GM12878 (cell line): ENCODE measurements at regions of chr15 and their contacts with region 1.

Region 1: GRCh38 chr15:60585743-60586708 is 107.1 kb upstream of the ICE2 start:
- DNase-seq: no peak
- ATAC-seq: peak; percentile 34
- H3K4me3 ChIP-seq: peak overlapping the region; percentile 11
- H3K27ac ChIP-seq: peak overlapping the region; percentile 94
- H3K4me1 ChIP-seq: peaks cover 45% of the 10 kb centered on the region
- H3K27me3 ChIP-seq: no peaks in the 10 kb centered on the region
- CTCF ChIP-seq: peak; percentile 74 to 90 (median 90)
- EP300 ChIP-seq: no peak
- POLR2A ChIP-seq: no peak
- RAD21 ChIP-seq: peak; percentile 95

Region 2: DNA sequence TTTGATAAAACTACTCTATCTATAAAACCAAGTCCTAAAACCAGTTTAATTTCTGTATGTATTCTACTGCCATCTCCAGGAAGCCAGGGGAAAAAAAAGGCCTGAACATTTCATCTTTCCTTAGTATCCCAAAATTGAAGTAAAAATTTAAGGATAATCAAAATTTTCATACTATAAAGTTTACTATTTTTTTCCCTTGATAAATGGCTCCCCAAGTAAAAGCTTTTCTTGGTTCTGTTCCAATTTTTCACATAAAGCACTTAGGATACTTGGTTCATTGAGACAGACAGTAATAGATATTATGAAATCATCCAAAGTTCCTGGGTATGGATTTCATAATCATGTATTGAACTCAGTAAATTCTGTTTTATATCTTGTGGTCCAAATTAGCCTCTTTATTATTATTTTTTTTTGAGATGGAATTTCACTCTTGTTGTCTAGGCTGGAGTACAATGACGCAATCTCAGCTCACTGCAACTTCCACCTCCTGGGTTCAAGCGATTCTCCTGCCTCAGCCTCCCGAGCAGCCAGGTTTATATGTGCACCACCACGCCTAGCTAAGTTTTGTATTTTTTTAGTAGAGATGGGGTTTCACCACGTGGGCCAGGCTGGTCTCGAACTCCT is 141.6 kb before region 1 on chr15:
- CTCF ChIA-PET with region 1: no interaction called
- POLR2A ChIA-PET with region 1: no interaction called
- RAD21 ChIA-PET with region 1: no interaction called
- SMC1A ChIA-PET with region 1: no interaction called
- in situ Hi-C with region 1: no loop called
- intact Hi-C with region 1: no loop called
- DNase-seq: no peak
- ATAC-seq: no peak
- H3K4me3 ChIP-seq: no peak overlapping the region
- H3K27ac ChIP-seq: no peak overlapping the region
- H3K4me1 ChIP-seq: no peaks in the 10 kb centered on the region
- H3K27me3 ChIP-seq: no peaks in the 10 kb centered on the region
- CTCF ChIP-seq: no peak; a peak in 1 of 6 replicates
- EP300 ChIP-seq: no peak
- POLR2A ChIP-seq: no peak
- RAD21 ChIP-seq: no peak

Region 3: GRCh38 chr15:60507596-60508424 is 78.2 kb before region 1 on chr15:
- CTCF ChIA-PET with region 1: interaction called, 56 read pairs
- POLR2A ChIA-PET with region 1: no interaction called
- RAD21 ChIA-PET with region 1: interaction called, 35 read pairs
- SMC1A ChIA-PET with region 1: interaction called, 25 read pairs
- in situ Hi-C with region 1: no loop called
- intact Hi-C with region 1: loop called (anchors 2 kb)
- DNase-seq: peak; percentile 83
- ATAC-seq: peak; percentile 92
- H3K4me3 ChIP-seq: no peak overlapping the region
- H3K27ac ChIP-seq: peak overlapping the region; percentile 46; the same call in 1 of the 2 replicates
- H3K4me1 ChIP-seq: peaks cover 18% of the 10 kb centered on the region
- H3K27me3 ChIP-seq: no peaks in the 10 kb centered on the region
- CTCF ChIP-seq: peak; percentile 88 to 97 (median 95)
- EP300 ChIP-seq: no peak
- POLR2A ChIP-seq: no peak
- RAD21 ChIP-seq: peak; percentile 92

Region 4: DNA sequence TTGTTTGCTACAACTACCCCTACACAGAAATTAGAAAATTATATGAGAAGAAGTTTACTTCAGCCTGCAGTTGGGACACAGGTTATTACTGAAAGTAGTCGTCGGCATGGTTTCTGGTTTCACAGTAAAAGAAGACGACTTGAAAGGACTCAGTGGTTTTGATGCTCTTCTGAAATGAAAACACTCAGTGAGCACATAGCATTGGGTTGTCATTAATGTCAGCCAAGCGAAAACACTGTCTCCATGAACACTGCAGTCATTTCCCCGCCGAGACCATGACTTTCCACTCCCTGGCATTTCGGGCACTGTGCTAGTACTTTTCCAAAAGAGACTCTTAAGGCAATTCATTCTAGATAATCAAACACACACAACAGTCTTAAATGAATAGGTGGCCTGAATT is 37.9 kb before region 1 on chr15:
- CTCF ChIA-PET with region 1: interaction called, 44 read pairs
- POLR2A ChIA-PET with region 1: interaction called, 4 read pairs
- RAD21 ChIA-PET with region 1: interaction called, 39 read pairs
- SMC1A ChIA-PET with region 1: interaction called, 113 read pairs
- in situ Hi-C with region 1: no loop called
- intact Hi-C with region 1: loop called (anchors 2 kb)
- DNase-seq: peak; percentile 85
- ATAC-seq: peak; percentile 86
- H3K4me3 ChIP-seq: peak overlapping the region; percentile 11; the same call in 1 of the 2 replicates
- H3K27ac ChIP-seq: peak overlapping the region; percentile 66
- H3K4me1 ChIP-seq: peaks cover 49% of the 10 kb centered on the region
- H3K27me3 ChIP-seq: no peaks in the 10 kb centered on the region
- CTCF ChIP-seq: no peak
- EP300 ChIP-seq: peak; percentile 66 to 76
- POLR2A ChIP-seq: no peak
- RAD21 ChIP-seq: peak; percentile 10; the same call in 1 of the 2 replicates

Region 5: DNA sequence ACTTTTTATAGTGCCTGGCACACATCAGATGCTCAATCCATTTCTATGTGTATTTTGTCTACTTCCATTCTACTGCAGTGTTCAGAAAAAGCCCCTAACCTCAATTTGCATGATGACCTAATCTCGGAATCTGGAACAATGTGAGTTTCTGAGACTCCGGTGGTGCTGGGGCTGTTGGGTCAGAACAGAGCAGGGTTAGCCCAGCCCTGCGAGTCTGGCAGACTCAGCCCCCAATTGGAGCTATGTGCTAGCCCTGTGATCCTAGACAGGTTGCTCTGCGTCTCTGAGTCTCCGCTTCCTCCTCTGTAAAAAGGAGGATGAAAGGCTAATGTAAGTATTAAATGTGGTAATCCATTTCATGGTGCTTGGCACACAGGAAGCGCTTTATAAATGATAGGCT is 12.1 kb before region 1 on chr15:
- CTCF ChIA-PET with region 1: interaction called, 143 read pairs
- POLR2A ChIA-PET with region 1: interaction called, 15 read pairs
- RAD21 ChIA-PET with region 1: interaction called, 309 read pairs
- SMC1A ChIA-PET with region 1: interaction called, 480 read pairs
- in situ Hi-C with region 1: no loop called
- intact Hi-C with region 1: loop called (anchors 2 kb)
- DNase-seq: no peak
- ATAC-seq: peak; percentile 82
- H3K4me3 ChIP-seq: peak overlapping the region; percentile 56; the same call in 1 of the 2 replicates
- H3K27ac ChIP-seq: peak overlapping the region; percentile 84
- H3K4me1 ChIP-seq: peaks cover 71% of the 10 kb centered on the region
- H3K27me3 ChIP-seq: no peaks in the 10 kb centered on the region
- CTCF ChIP-seq: no peak
- EP300 ChIP-seq: peak in 1 of 2 experiments; percentile 57; a peak in 1 of 4 replicates
- POLR2A ChIP-seq: peak; percentile 50; the same call in 1 of the 2 replicates
- RAD21 ChIP-seq: no peak

Region 6: GRCh38 chr15:60798821-60799220 is 212.8 kb after region 1 on chr15:
- CTCF ChIA-PET with region 1: interaction called, 7 read pairs
- POLR2A ChIA-PET with region 1: no interaction called
- RAD21 ChIA-PET with region 1: no interaction called
- SMC1A ChIA-PET with region 1: no interaction called
- in situ Hi-C with region 1: no loop called
- intact Hi-C with region 1: loop called (anchors 5 kb)
- DNase-seq: peak; percentile 19
- ATAC-seq: peak; percentile 76
- H3K4me3 ChIP-seq: no peak overlapping the region
- H3K27ac ChIP-seq: no peak overlapping the region
- H3K4me1 ChIP-seq: peaks cover 19% of the 10 kb centered on the region
- H3K27me3 ChIP-seq: no peaks in the 10 kb centered on the region
- CTCF ChIP-seq: no peak
- EP300 ChIP-seq: no peak
- POLR2A ChIP-seq: no peak
- RAD21 ChIP-seq: 0 out of 2 replicates have a peak, but pooled peaks have one; percentile 20

Region 7: DNA sequence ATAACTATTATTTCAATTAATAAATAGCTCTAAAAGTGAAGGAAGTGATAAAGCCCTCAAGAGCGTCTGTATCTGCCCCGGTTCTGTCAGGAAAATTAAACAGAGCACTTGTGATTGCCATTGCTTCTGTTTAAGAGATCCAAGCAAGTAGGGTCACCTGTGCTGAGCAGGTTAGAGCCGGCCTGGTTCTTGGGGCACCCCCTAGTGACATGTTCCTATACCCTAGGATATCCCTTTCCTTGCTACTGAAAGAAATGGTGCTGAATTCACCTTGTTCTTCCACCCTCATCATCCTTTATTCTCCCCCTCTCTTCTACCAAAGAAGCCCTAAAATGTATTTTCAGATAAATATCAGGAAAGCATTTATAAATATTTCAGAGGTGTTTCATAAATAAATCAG is 319.6 kb after region 1 on chr15:
- CTCF ChIA-PET with region 1: interaction called, 82 read pairs
- POLR2A ChIA-PET with region 1: interaction called, 5 read pairs
- RAD21 ChIA-PET with region 1: interaction called, 16 read pairs
- SMC1A ChIA-PET with region 1: interaction called, 22 read pairs
- in situ Hi-C with region 1: loop called (anchors 5 kb)
- intact Hi-C with region 1: loop called (anchors 5 kb)
- DNase-seq: no peak
- ATAC-seq: peak; percentile 32
- H3K4me3 ChIP-seq: no peak overlapping the region
- H3K27ac ChIP-seq: no peak overlapping the region
- H3K4me1 ChIP-seq: peaks cover 26% of the 10 kb centered on the region
- H3K27me3 ChIP-seq: no peaks in the 10 kb centered on the region
- CTCF ChIP-seq: peak in 2 of 3 experiments; percentile 22 to 45; a peak in 3 of 6 replicates
- EP300 ChIP-seq: no peak
- POLR2A ChIP-seq: no peak
- RAD21 ChIP-seq: peak; percentile 52

Region 8: GRCh38 chr15:61834076-61834697 is 1248.2 kb after region 1 on chr15:
- CTCF ChIA-PET with region 1: interaction called, 12 read pairs
- POLR2A ChIA-PET with region 1: no interaction called
- RAD21 ChIA-PET with region 1: interaction called, 6 read pairs
- SMC1A ChIA-PET with region 1: interaction called, 8 read pairs
- in situ Hi-C with region 1: loop called (anchors 10 kb)
- intact Hi-C with region 1: loop called (anchors 5 kb)
- DNase-seq: no peak
- ATAC-seq: peak; percentile 88
- H3K4me3 ChIP-seq: no peak overlapping the region
- H3K27ac ChIP-seq: no peak overlapping the region
- H3K4me1 ChIP-seq: no peaks in the 10 kb centered on the region
- H3K27me3 ChIP-seq: no peaks in the 10 kb centered on the region; a peak in 2 of 4 replicates
- CTCF ChIP-seq: peak; percentile 94 to 96 (median 96)
- EP300 ChIP-seq: no peak
- POLR2A ChIP-seq: no peak
- RAD21 ChIP-seq: peak; percentile 82